Naive thymus-derived CD4-positive, alpha-beta T cell (primary cell): ENCODE measurements at regions of chr10 and their contacts with region 1.

Region 1: DNA sequence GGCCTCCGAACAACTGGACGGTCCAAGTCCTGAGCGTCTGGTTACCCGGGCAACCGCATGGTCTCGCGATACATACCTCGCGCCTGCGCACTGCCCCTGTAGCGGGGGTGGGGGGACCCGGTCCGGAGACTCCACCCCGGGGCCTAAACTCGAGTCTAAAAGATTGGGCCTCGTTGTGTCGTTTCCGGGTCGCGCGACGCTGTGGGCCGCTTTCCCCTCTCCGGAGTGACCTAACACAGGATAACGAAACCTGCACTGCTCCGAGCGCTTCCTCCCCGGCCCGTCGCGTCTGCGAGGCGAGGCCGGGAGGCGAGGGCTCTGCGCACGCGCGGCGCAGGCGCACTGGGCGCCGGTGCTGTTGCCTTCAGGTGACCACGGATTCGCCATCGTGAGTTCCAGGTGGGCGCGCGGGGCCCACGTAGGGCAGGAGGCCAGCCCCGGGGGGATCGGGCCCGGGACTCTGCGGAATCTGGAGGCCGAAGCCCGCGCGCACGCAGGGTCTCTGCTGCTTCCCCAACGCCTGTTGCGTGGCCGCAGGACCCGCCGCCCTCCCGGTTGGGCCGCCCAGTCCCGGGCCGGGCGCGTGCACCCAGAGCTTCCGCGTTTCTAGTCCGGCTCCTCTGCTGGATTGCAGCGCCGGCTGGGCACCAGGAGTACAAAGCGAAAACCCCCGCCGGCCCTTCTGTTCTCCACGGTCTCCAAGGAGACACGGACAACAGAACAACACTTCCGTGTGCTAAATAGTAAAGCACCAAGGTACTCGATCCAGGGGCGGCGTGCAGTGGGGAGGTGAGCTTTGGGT is at the start of gene RPP38:
- DNase-seq: peak; percentile 88 to 98 (median 95)
- ATAC-seq: peak; percentile 85
- H3K4me3 ChIP-seq: peak within 1 kb of the TSS; percentile 80
- H3K4me3 Mint-ChIP-seq: peak within 1 kb of the TSS; percentile 91 to 100 (median 98)
- H3K27ac ChIP-seq: peak within 1 kb of the TSS; percentile 94
- H3K27ac Mint-ChIP-seq: peak within 1 kb of the TSS; percentile 94 to 100 (median 98)
- H3K4me1 ChIP-seq: peaks cover 16 to 22% of the 10 kb centered on the region in 2 donors
- H3K4me1 Mint-ChIP-seq: peaks cover 22 to 50% (median 40%) of the 10 kb centered on the region in 7 donors
- H3K27me3 ChIP-seq: no peaks in the 10 kb centered on the region
- H3K27me3 Mint-ChIP-seq: peaks cover 0 to 3% (median 0%) of the 10 kb centered on the region in 5 donors
- total RNA-seq, gene RPP38: 7.6 to 22.4 (median 16.0) TPM

Region 2: GRCh38 chr10:14954001-14954770 is 143.0 kb before region 1 on chr10 and contains the start of gene DCLRE1C:
- CTCF ChIA-PET with region 1: no interaction called
- POLR2A ChIA-PET with region 1: interaction called, 7 read pairs
- intact Hi-C with region 1: loop called (anchors 1 kb)
- DNase-seq: peak; percentile 70 to 89 (median 87)
- ATAC-seq: peak; percentile 90
- H3K4me3 ChIP-seq: peak within 1 kb of the TSS; percentile 97
- H3K4me3 Mint-ChIP-seq: peak within 1 kb of the TSS; percentile 89 to 96 (median 92)
- H3K27ac ChIP-seq: peak within 1 kb of the TSS; percentile 78
- H3K27ac Mint-ChIP-seq: peak within 1 kb of the TSS; percentile 91 to 97 (median 96)
- H3K4me1 ChIP-seq: peaks cover 29 to 32% of the 10 kb centered on the region in 2 donors
- H3K4me1 Mint-ChIP-seq: peaks cover 29 to 69% (median 65%) of the 10 kb centered on the region in 7 donors
- H3K27me3 ChIP-seq: no peaks in the 10 kb centered on the region
- H3K27me3 Mint-ChIP-seq: no peaks in the 10 kb centered on the region
- total RNA-seq, gene DCLRE1C: 16.4 to 38.7 (median 24.2) TPM

Region 3: GRCh38 chr10:14959276-14960057 is 137.7 kb before region 1 on chr10 and contains the start of gene MEIG1:
- CTCF ChIA-PET with region 1: no interaction called
- POLR2A ChIA-PET with region 1: interaction called, 7 read pairs
- intact Hi-C with region 1: loop called (anchors 1 kb)
- DNase-seq: peak; percentile 82 to 99 (median 90)
- ATAC-seq: peak; percentile 93
- H3K4me3 ChIP-seq: peak within 1 kb of the TSS; percentile 97
- H3K4me3 Mint-ChIP-seq: peak within 1 kb of the TSS; percentile 91 to 99 (median 96)
- H3K27ac ChIP-seq: peak within 1 kb of the TSS; percentile 81
- H3K27ac Mint-ChIP-seq: peak within 1 kb of the TSS; percentile 93 to 98 (median 96)
- H3K4me1 ChIP-seq: peaks cover 8 to 10% of the 10 kb centered on the region in 2 donors
- H3K4me1 Mint-ChIP-seq: peaks cover 6 to 42% (median 34%) of the 10 kb centered on the region in 7 donors
- H3K27me3 ChIP-seq: no peaks in the 10 kb centered on the region
- H3K27me3 Mint-ChIP-seq: no peaks in the 10 kb centered on the region
- total RNA-seq, gene MEIG1: 1.2 to 1.9 TPM in 2 of 5 experiments, not detected in the others

Region 4: GRCh38 chr10:15254808-15255648 is 157.8 kb after region 1 on chr10:
- CTCF ChIA-PET with region 1: no interaction called
- POLR2A ChIA-PET with region 1: interaction called, 4 read pairs
- intact Hi-C with region 1: loop called in 1 of 2 experiments (anchors 5 kb)
- DNase-seq: peak in 6 of 9 donors; percentile 10 to 35 (median 24)
- ATAC-seq: peak; percentile 45
- H3K4me3 ChIP-seq: peak overlapping the region; percentile 74
- H3K4me3 Mint-ChIP-seq: peak overlapping the region; percentile 87 to 99 (median 95)
- H3K27ac ChIP-seq: peak overlapping the region; percentile 76
- H3K27ac Mint-ChIP-seq: peak overlapping the region; percentile 68 to 95 (median 93)
- H3K4me1 ChIP-seq: peaks cover 8 to 10% of the 10 kb centered on the region in 2 donors
- H3K4me1 Mint-ChIP-seq: peaks cover 22 to 52% (median 44%) of the 10 kb centered on the region in 7 donors
- H3K27me3 ChIP-seq: no peaks in the 10 kb centered on the region
- H3K27me3 Mint-ChIP-seq: peaks cover 0 to 5% (median 0%) of the 10 kb centered on the region in 5 donors